ENCODE measurements at regions of chrX and their contacts with region 1.

Region 1: DNA sequence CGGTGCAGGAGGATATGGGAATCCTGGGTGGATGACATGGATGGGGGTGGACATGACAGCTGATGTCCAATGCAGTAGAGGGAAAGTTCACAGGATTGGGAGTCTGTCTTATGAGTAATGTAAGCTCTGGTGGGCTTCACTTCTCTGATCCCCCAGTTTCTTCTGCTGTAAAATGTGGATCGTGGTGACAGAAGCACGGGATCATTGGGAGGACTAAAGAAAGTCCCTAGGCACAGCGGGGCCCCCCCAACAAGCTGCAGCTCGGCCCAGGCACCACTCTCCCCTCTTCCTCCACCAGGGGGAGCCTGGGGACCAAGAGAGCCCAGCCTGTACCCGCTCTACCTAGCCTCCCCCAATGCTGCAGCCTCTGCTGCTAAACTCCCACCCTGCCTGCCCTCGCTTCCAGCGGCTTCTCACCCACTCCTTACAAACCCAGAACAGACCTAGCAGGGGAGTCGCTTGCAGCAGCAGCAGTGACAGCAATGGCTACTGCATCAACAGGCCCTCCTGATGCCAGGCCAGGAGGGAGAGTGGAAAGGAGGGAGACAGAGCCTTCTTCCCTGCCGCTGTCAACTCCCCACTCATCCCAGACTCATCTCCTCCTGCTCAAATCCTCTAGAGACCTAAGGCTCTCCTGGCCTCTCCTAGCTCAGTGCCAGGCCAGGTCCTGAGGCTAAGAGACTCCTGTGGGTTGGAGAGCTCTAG is 36.1 kb upstream of the IQSEC2 start:
- DNase-seq: peak; percentile 30
- H3K4me3 Mint-ChIP-seq: no peak overlapping the region
- H3K27ac Mint-ChIP-seq: no peak overlapping the region
- H3K4me1 Mint-ChIP-seq: peaks cover 17% of the 10 kb centered on the region
- H3K27me3 Mint-ChIP-seq: peaks cover 34% of the 10 kb centered on the region

Region 2: DNA sequence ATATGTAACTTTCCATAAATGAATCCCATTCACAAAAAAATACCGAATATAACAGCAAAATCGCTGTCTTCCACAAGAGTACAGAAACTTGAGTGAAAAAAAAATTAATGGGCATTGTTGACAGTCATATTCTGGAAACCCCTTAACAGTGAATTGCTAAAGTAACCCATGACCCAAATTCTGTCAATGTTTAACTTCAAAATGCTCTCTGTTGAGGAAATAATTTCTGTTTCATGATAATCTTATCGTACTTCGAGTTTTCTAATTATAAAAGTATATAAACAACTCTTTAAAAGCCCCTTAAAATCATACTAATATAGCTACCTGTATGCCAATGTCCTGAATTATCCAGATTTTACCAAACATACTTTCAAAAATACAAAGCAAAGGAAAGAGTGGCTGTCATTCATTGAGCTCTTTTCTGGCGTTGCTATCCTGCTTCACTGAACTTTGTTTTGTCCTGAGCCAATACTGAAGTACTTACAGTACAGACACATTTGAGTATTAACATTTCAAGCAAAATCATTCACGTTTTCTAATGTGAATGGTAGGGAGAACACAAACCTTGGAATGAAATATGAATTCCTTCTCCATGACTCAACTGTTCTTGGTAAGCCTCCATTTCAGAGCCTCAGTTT is 452.1 kb before region 1 on chrX:
- intact Hi-C with region 1: no loop called
- DNase-seq: no peak
- H3K4me3 Mint-ChIP-seq: no peak overlapping the region
- H3K27ac Mint-ChIP-seq: no peak overlapping the region
- H3K4me1 Mint-ChIP-seq: no peaks in the 10 kb centered on the region
- H3K27me3 Mint-ChIP-seq: peaks cover 8% of the 10 kb centered on the region

Region 3: DNA sequence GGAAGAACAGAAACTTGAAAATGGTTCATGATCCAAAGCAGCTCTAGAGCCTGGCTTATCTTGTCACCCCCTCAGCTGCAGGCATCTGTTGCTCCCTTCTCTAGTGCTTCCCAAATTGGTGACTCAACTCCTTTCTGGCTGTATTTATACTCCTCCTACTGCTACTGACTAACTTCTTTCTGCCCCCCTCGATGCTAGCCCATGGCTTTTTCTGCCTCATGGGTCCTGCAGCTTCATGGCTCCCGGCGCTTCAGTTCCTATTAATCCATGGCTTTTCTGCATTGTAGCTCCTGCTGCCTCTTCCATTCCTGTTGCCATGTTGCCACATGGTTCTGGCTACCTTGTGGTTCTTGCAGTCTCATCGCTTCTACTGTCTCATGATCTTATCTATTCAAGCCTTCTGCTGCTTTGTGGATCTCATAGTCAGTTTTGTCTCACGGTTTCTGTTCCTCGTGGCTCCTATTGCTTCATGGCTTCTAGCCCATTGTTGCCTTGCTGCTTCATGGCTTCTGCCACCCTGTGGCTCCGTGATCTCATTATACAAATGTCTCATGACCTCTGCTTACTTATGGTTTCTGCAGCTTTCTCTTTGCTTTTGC is 56.8 kb after region 1 on chrX:
- intact Hi-C with region 1: loop called (anchors 10 kb)
- DNase-seq: no peak
- H3K4me3 Mint-ChIP-seq: no peak overlapping the region
- H3K27ac Mint-ChIP-seq: no peak overlapping the region
- H3K4me1 Mint-ChIP-seq: no peaks in the 10 kb centered on the region
- H3K27me3 Mint-ChIP-seq: no peaks in the 10 kb centered on the region

Region 4: GRCh38 chrX:53433651-53434639 is 116.4 kb after region 1 on chrX and contains the start of gene HSD17B10:
- intact Hi-C with region 1: loop called (anchors 1 kb)
- DNase-seq: peak; percentile 85
- H3K4me3 Mint-ChIP-seq: peak within 1 kb of the TSS; percentile 90
- H3K27ac Mint-ChIP-seq: peak within 1 kb of the TSS; percentile 80
- H3K4me1 Mint-ChIP-seq: peaks cover 24% of the 10 kb centered on the region
- H3K27me3 Mint-ChIP-seq: no peaks in the 10 kb centered on the region
- total RNA-seq, gene HSD17B10: 158 and 161 TPM in 2 replicates

Region 5: DNA sequence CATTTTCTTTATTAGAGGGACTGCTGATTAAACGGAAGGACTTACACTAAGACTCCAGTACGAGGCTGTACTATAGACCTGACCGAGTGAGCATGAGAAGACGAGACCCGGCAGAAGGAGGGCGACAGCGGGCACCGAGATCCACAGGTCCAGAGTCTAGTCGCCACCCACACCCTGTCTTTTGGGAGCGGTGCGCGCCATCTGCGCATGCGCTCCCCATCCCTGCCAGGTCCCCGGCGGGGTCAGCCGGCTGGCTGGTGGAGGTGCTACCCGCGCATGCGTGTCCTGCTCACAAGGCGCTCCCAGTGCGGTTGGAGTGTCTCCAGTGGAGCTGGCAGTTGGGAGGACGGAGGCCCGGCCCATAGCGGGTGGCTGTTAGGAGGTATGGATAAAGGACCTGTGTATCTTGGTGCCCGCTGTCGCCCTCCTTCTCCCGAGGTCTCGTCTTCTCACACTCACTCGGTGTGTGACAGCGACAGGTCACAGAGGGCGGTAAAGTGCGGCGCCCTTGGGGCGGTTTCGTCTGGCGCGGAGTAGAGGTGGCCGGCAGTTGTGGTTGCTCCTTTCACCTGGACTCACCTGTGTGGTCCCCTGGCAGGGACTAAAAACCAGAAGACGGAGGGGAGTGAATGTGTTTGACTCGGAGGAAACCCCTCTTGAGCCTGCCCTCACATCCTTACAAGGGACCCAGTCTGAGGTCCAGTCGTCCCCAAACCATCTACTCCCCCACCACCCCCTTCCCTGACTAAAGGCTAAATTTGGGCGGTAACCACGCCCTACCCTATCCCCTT is 124.2 kb after region 1 on chrX:
- intact Hi-C with region 1: loop called (anchors 1 kb)
- DNase-seq: peak; percentile 74
- H3K4me3 Mint-ChIP-seq: peak overlapping the region; percentile 80
- H3K27ac Mint-ChIP-seq: peak overlapping the region; percentile 72
- H3K4me1 Mint-ChIP-seq: peaks cover 20% of the 10 kb centered on the region
- H3K27me3 Mint-ChIP-seq: peaks cover 2% of the 10 kb centered on the region

Region 6: GRCh38 chrX:53481816-53482465 is 164.4 kb after region 1 on chrX:
- intact Hi-C with region 1: loop called (anchors 1 kb)
- DNase-seq: peak; percentile 20
- H3K4me3 Mint-ChIP-seq: no peak overlapping the region
- H3K27ac Mint-ChIP-seq: no peak overlapping the region
- H3K4me1 Mint-ChIP-seq: no peaks in the 10 kb centered on the region
- H3K27me3 Mint-ChIP-seq: peaks cover 9% of the 10 kb centered on the region

Region 7: GRCh38 chrX:53538781-53539180 is 221.3 kb after region 1 on chrX:
- intact Hi-C with region 1: loop called (anchors 10 kb)
- DNase-seq: no peak
- H3K4me3 Mint-ChIP-seq: no peak overlapping the region
- H3K27ac Mint-ChIP-seq: no peak overlapping the region
- H3K4me1 Mint-ChIP-seq: no peaks in the 10 kb centered on the region
- H3K27me3 Mint-ChIP-seq: no peaks in the 10 kb centered on the region

Region 8: DNA sequence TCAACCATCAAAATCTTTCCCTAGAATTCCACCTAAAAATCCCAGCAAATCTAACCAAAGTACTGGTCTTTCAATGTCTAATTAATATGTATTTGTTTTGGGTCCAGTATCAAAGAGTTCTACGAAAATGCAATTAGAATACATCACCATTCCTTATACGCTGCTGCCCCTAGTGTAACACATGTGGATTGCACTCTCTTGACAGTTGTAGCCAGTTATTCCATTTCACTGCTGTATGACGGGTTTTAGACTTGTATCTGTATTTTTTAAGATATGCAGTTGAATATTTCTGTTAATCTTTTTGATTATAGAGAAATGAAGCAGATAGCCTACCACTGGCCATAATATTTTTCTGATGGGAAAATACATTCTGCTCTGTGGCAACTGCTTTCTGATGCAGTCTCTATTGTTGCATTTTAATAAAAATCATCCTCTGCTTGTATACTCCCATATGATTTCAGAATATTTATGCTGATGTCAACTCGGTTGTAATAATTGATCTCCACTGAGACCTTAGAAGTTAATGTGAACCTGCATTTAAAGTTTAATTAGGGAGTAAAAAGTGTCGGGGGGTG is 1740.2 kb after region 1 on chrX:
- intact Hi-C with region 1: loop called (anchors 5 kb)
- DNase-seq: peak; percentile 0
- H3K4me3 Mint-ChIP-seq: peak overlapping the region; percentile 58
- H3K27ac Mint-ChIP-seq: no peak overlapping the region
- H3K4me1 Mint-ChIP-seq: peaks cover 12% of the 10 kb centered on the region
- H3K27me3 Mint-ChIP-seq: peaks cover under 1% of the 10 kb centered on the region

Measured in activated T-helper 1 cell treated with anti-CD3 and anti-CD28 coated beads, Interleukin-12 subunit alpha, Interleukin-12 subunit beta, Interleukin-2, Interleukin-4 antibody, amounts not matched to agents 30 ng/mL and 10 ng/mL and 1 ng/mL, durations not matched to agents 14 hours and 24 hours and 36 hours (primary cell).